Aorta (tissue), 5 donors: ENCODE measurements at regions of chr6 and their contacts with region 1.

Region 1: DNA sequence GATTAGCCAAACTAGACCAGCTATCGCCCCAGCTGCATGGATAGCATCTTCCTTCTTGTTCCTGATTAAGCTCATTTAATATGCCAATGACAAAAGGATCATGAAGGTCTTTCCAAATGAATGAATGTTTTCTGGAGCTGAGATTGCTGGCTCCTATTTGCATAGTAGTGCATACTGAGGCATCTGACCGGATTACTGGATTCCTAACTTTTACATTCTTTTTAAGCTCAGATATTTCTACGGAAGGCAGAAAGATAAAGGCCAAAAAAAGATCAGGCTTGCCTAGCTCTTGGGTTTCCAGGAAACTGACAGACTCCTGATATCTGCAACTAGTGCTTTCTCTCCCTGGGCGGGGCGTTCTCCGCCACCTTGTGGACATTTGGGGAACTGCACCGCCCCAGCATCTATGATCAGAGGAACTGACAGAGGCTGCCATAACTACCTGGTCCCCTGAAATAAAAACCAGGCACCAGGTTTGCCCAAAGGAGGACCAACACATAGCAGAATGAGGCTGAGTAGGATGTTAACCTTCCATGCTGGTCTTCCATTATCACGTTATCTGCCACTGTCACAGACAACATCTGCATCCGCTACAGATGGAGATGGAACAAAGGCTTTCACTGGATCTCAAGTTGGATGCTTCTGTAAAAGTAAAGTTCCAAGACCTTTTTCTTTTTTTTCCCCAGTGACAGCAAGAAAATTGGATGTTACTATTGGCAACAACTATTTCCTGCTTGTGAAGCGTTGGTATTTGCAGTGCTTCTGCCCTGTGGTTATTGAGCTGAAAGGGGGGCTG is 33.2 kb downstream of the NT5E start:
- DNase-seq: peak; percentile 79 to 94
- ATAC-seq: peak; percentile 94
- H3K4me3 ChIP-seq: no peak overlapping the region
- H3K27ac ChIP-seq: peak overlapping the region in 1 of 2 donors; percentile 52
- H3K4me1 ChIP-seq: no peaks in the 10 kb centered on the region
- H3K27me3 ChIP-seq: no peaks in the 10 kb centered on the region

Region 2: DNA sequence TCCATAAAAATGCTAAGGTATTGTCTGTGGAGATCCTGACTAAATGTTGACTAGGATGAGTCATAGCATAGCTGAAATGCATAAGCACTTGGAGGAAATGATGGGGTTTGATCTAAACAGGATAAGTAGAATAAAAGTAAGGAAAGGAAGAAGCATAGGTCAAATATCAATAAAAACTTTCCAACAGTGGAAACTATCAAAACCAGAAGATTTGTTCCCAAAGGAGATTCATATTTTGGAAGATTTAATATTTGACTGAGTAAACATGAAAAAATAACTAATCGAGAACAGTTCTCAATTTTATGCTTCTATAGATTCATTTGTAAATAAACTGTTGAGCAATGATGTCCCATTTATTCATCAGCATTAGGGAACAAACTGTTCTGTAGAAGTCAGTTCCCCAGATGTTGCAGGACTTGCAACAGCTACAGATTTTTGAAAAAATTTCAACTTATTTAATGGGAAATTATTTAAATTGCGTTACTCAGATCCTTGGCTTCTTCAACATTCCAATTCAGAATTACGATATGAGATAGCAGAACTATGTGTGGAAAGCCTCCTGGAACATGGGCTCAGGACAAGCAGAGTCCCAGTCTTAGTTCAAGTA is 585.0 kb before region 1 on chr6:
- intact Hi-C with region 1: no loop called
- DNase-seq: no peak
- ATAC-seq: no peak
- H3K4me3 ChIP-seq: no peak overlapping the region
- H3K27ac ChIP-seq: no peak overlapping the region
- H3K4me1 ChIP-seq: no peaks in the 10 kb centered on the region
- H3K27me3 ChIP-seq: no peaks in the 10 kb centered on the region

Region 3: DNA sequence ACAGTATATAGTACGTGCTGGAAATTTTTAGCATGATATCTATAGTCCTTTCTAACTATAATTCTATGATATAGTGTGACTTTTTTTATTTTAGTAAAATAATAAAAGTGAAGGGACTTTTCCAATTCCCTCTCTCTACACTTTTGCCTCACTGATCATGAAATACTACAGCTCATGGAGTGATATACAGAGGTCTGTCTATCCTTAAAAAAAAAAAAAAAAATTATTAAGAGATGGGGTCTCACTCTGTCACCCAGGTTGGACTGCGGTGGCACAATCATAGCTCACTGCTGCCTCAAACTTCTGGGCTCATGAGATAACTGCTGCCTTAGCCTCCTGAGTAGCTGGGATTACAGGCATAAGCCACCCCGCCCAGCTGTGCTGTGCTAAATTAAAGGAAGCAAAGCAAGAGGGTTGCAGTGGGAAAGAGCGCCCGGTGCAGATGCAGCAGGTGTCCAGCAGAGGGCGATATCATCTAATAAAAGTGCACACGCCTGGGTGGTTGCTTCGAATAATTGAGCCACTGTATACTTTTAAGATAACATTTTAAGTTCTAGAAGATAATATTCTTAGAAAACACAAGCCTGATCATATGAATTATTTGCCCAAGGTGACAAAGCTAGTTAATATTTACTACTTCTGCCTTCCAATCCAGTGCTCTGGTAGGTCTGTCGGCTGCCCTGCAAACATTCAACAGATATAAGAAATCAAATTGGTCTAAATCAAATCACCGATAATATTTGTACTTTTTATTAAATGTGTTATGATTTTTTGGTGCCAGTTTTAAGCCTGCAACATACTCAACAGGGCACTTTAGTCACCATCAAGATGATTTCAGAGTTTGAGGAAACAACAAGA is 128.1 kb before region 1 on chr6:
- intact Hi-C with region 1: loop called (anchors 1 to 2 kb)
- DNase-seq: peak; percentile 79 to 91
- ATAC-seq: peak; percentile 94
- H3K4me3 ChIP-seq: no peak overlapping the region
- H3K27ac ChIP-seq: no peak overlapping the region
- H3K4me1 ChIP-seq: no peaks in the 10 kb centered on the region
- H3K27me3 ChIP-seq: no peaks in the 10 kb centered on the region

Region 4: GRCh38 chr6:85449818-85450759 is 33.0 kb before region 1 on chr6 and contains the start of gene NT5E:
- intact Hi-C with region 1: loop called (anchors 2 to 5 kb)
- DNase-seq: peak; percentile 92 to 97
- ATAC-seq: peak; percentile 97
- H3K4me3 ChIP-seq: peak within 1 kb of the TSS; percentile 65 to 75
- H3K27ac ChIP-seq: peak within 1 kb of the TSS; percentile 84 to 88
- H3K4me1 ChIP-seq: peaks cover 3 to 9% of the 10 kb centered on the region in 2 donors
- H3K27me3 ChIP-seq: no peaks in the 10 kb centered on the region
- total RNA-seq, gene NT5E: 63.2 to 68.9 TPM